ENCODE measurements at regions of chr6 and their contacts with region 1.

Region 1: DNA sequence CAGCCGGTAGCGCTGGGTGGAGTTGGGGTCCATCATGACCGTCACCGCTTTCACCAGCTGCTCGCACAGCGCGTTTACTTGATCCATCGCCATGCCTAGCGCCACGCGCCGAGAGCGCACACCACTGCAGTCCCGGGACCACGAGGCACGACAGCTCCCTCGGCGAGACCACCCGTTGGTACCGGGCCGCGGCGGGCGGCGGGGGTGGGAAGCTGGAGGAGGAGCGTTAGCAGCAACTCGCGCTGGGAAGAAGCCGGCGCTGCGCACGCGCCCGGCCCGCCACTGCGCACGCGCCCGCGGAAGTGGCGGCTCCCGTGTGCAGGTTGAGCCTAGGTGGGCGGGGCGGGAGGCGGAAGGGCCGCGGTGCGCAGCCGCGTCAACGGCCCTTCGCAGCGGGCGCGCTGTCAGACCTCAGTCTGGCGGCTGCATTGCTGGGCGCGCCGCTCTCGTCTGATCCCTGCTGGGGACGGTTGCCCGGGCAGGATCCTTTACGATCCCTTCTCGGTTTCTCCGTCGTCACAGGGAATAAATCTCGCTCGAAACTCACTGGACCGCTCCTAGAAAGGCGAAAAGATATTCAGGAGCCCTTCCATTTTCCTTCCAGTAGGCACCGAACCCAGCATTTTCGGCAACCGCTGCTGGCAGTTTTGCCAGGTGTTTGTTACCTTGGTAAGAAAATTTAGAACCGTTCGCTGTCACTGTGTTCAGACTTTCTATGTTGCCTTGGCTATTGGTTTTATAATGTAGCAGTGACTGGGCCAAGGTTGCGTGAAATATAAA is at the starts of genes POLH and XPO5:
- DNase-seq: peak; percentile 89 to 96
- H3K4me3 ChIP-seq: peak within 1 kb of the TSS; percentile 100
- H3K4me3 Mint-ChIP-seq: peak within 1 kb of the TSS; percentile 100
- H3K27ac Mint-ChIP-seq: peak within 1 kb of the TSS; percentile 98
- H3K4me1 ChIP-seq: peaks cover 4% of the 10 kb centered on the region; the same call in 1 of the 2 replicates
- H3K4me1 Mint-ChIP-seq: peaks cover 16% of the 10 kb centered on the region
- H3K27me3 ChIP-seq: no peaks in the 10 kb centered on the region
- H3K27me3 Mint-ChIP-seq: no peaks in the 10 kb centered on the region
- CTCF ChIP-seq: peak in 1 of 2 experiments; percentile 21
- total RNA-seq, gene POLH: 12.3 and 14.2 TPM in 2 replicates
- total RNA-seq, gene XPO5: 79.3 and 93.4 TPM in 2 replicates

Region 2: GRCh38 chr6:43629505-43630300 is 53.7 kb after region 1 on chr6:
- CTCF ChIA-PET with region 1: no interaction called
- POLR2A ChIA-PET with region 1: interaction called, 12 read pairs
- intact Hi-C with region 1: loop called (anchors 2 kb)
- DNase-seq: peak; percentile 95 to 96
- H3K4me3 ChIP-seq: peak overlapping the region; percentile 82
- H3K4me3 Mint-ChIP-seq: peak overlapping the region; percentile 91
- H3K27ac Mint-ChIP-seq: peak overlapping the region; percentile 99
- H3K4me1 ChIP-seq: no peaks in the 10 kb centered on the region; the same call in 1 of the 2 replicates
- H3K4me1 Mint-ChIP-seq: peaks cover 12% of the 10 kb centered on the region
- H3K27me3 ChIP-seq: no peaks in the 10 kb centered on the region
- H3K27me3 Mint-ChIP-seq: no peaks in the 10 kb centered on the region
- CTCF ChIP-seq: no peak